ENCODE measurements at regions of chr4 and their contacts with region 1.

Region 1: GRCh38 chr4:137283737-137284136 is 248.6 kb downstream of the PCDH18 start:
- DNase-seq: peak; percentile 17
- H3K4me3 ChIP-seq: no peak overlapping the region
- H3K27ac ChIP-seq: no peak overlapping the region
- H3K4me1 ChIP-seq: no peaks in the 10 kb centered on the region
- H3K27me3 ChIP-seq: no peaks in the 10 kb centered on the region
- CTCF ChIP-seq: peak; percentile 14 to 57

Region 2: GRCh38 chr4:137432446-137433311 is 148.9 kb after region 1 on chr4:
- CTCF ChIA-PET with region 1: no interaction called
- dilution Hi-C with region 1: no loop called
- in situ Hi-C with region 1: no loop called
- intact Hi-C with region 1: loop called (anchors 10 kb)
- DNase-seq: no peak
- H3K4me3 ChIP-seq: no peak overlapping the region
- H3K27ac ChIP-seq: no peak overlapping the region
- H3K4me1 ChIP-seq: no peaks in the 10 kb centered on the region
- H3K27me3 ChIP-seq: no peaks in the 10 kb centered on the region
- CTCF ChIP-seq: no peak

Region 3: GRCh38 chr4:137531986-137532868 is 248.5 kb after region 1 on chr4 and contains the start of gene PCDH18:
- CTCF ChIA-PET with region 1: no interaction called
- dilution Hi-C with region 1: no loop called
- in situ Hi-C with region 1: no loop called
- intact Hi-C with region 1: loop called (anchors 1 kb)
- DNase-seq: peak; percentile 15
- H3K4me3 ChIP-seq: peak within 1 kb of the TSS; percentile 2 to 35 (median 17)
- H3K27ac ChIP-seq: no peak within 1 kb of the TSS
- H3K4me1 ChIP-seq: no peaks in the 10 kb centered on the region
- H3K27me3 ChIP-seq: peaks cover 2% of the 10 kb centered on the region
- CTCF ChIP-seq: no peak
- total RNA-seq, gene PCDH18: 0.12 to 1.2 TPM

Region 4: GRCh38 chr4:137610960-137611359 is 327.2 kb after region 1 on chr4:
- CTCF ChIA-PET with region 1: no interaction called
- dilution Hi-C with region 1: no loop called
- in situ Hi-C with region 1: no loop called
- intact Hi-C with region 1: loop called (anchors 1 kb)
- DNase-seq: no peak
- H3K4me3 ChIP-seq: no peak overlapping the region
- H3K27ac ChIP-seq: no peak overlapping the region
- H3K4me1 ChIP-seq: no peaks in the 10 kb centered on the region
- H3K27me3 ChIP-seq: no peaks in the 10 kb centered on the region
- CTCF ChIP-seq: peak; percentile 37 to 42